ENCODE measurements at regions of chr17 and their contacts with region 1.

Region 1: DNA sequence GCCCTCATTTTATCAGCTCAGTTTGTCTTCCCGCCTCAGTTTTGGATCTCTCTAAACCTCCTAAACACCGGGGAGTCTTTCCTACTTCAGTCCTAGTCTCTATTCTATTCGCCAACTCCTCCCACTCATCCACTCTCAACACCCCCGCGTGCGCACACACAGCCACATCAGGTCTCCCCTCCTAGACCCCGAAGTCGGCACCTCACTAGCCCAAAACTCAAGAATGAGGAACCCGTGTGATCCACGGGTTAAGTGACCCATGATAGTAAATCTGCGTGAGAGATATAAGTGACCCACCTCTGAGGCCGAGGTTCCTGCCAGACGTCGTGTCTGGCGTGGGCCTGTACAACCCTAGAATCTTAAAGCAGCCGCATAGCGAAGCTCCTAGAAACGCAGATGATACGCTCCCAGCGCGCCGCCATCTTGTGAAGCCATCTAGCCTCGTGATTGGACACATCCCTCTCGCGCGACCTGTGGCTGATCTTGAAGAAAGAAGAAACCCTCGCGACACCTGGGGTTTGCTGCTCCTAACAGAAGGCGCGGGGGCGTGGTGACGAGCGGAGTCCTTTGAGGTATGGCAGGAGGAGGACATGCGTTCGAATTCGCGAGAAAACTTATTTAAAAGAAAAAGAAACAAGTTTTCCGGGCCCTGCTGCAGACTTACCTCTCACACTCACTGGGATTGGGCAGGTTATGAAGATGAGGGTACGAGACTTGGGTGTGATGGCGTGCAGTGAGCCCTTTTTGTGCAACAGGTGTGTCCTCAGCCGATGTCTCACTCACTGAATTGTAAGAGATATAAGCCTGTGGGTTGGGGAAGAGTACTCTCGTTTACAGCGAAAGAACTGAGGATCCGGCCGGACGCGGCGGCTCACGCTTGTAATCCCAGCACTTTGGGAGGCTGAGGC is at the start of gene METTL16:
- DNase-seq: peak; percentile 99
- ATAC-seq: peak; percentile 100
- H3K4me3 ChIP-seq: peak within 1 kb of the TSS; percentile 94 to 97
- H3K27ac ChIP-seq: peak within 1 kb of the TSS; percentile 36 to 76
- H3K4me1 ChIP-seq: peaks cover 2 to 10% of the 10 kb centered on the region in 2 donors
- H3K27me3 ChIP-seq: no peaks in the 10 kb centered on the region
- total RNA-seq, gene METTL16: 24.6 to 33.3 TPM

Region 2: GRCh38 chr17:2688351-2689342 is 176.9 kb after region 1 on chr17:
- intact Hi-C with region 1: loop called (anchors 10 kb)
- DNase-seq: peak in 1 of 2 donors; percentile 45
- ATAC-seq: no peak
- H3K4me3 ChIP-seq: no peak overlapping the region
- H3K27ac ChIP-seq: no peak overlapping the region
- H3K4me1 ChIP-seq: no peaks in the 10 kb centered on the region
- H3K27me3 ChIP-seq: no peaks in the 10 kb centered on the region

Region 3: GRCh38 chr17:2711601-2712299 is 200.0 kb after region 1 on chr17 and contains the start of gene CLUH:
- intact Hi-C with region 1: loop called in 1 of 2 experiments (anchors 5 kb)
- DNase-seq: peak; percentile 98 to 99
- ATAC-seq: peak; percentile 95
- H3K4me3 ChIP-seq: peak within 1 kb of the TSS; percentile 67 to 82
- H3K27ac ChIP-seq: no peak within 1 kb of the TSS
- H3K4me1 ChIP-seq: peaks cover 0 to 2% of the 10 kb centered on the region in 2 donors
- H3K27me3 ChIP-seq: no peaks in the 10 kb centered on the region
- total RNA-seq, gene CLUH: 33.5 to 35.1 TPM